ENCODE measurements at regions of chr20 and their contacts with region 1.

Region 1: DNA sequence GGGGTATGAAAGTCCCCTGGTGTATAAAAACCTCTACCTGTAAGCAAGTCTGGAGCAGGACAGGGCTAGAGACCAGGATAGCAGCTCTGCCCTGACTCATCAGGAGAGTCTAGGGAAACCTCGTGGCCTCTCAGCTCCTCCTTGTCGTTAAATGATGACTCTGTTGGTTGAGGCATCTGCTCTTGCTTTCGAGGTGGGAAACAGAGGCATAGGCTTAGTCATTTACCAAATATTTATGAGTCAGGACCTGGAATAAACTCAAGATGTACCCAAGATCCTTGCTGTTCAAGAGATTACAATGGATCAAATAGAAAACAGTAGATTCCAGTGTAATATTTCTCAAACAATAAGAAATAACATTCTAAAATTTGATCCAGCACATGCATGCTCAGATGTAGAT is 5.5 kb downstream of the MANBAL start:
- DNase-seq: no peak
- ATAC-seq: no peak
- H3K4me3 ChIP-seq: no peak overlapping the region
- H3K4me3 Mint-ChIP-seq: no peak overlapping the region
- H3K27ac ChIP-seq: no peak overlapping the region
- H3K27ac Mint-ChIP-seq: no peak overlapping the region
- H3K4me1 ChIP-seq: peaks cover 26 to 28% of the 10 kb centered on the region in 2 donors
- H3K4me1 Mint-ChIP-seq: peaks cover 50% of the 10 kb centered on the region
- H3K27me3 ChIP-seq: no peaks in the 10 kb centered on the region
- H3K27me3 Mint-ChIP-seq: no peaks in the 10 kb centered on the region
- CTCF ChIP-seq: no peak

Region 2: DNA sequence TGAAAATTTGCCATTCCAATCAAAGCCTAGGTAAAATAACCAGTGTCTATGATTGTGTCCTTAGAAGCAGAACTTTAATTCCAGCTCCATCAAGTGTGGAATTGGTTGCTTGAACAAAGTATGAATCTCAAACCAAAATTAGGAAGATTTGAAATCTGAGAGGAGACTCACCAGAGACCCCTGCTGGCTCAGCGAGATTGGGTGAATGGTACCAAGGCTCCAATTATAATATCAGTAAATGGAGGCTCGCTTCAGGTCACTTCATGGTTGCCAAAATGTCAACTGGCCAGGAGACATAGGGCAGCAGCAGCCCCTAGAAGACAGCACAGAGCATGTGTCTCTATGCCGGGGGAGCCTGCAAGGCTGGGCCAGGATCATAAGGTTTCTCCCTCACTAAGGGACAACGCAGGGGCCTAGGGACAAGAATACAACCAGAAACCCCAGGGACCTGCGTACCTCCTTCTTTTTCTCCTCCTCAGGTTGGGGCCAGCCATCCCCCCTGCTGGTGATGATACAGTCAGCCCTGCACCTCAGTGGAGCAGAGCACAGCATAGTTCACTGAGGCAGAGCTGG is 213.2 kb before region 1 on chr20:
- CTCF ChIA-PET with region 1: no interaction called
- POLR2A ChIA-PET with region 1: no interaction called
- intact Hi-C with region 1: no loop called
- DNase-seq: peak; percentile 20
- ATAC-seq: no peak
- H3K4me3 ChIP-seq: no peak overlapping the region
- H3K4me3 Mint-ChIP-seq: no peak overlapping the region
- H3K27ac ChIP-seq: no peak overlapping the region
- H3K27ac Mint-ChIP-seq: no peak overlapping the region
- H3K4me1 ChIP-seq: no peaks in the 10 kb centered on the region
- H3K4me1 Mint-ChIP-seq: peaks cover 5% of the 10 kb centered on the region
- H3K27me3 ChIP-seq: no peaks in the 10 kb centered on the region
- H3K27me3 Mint-ChIP-seq: no peaks in the 10 kb centered on the region
- CTCF ChIP-seq: peak; percentile 26

Region 3: DNA sequence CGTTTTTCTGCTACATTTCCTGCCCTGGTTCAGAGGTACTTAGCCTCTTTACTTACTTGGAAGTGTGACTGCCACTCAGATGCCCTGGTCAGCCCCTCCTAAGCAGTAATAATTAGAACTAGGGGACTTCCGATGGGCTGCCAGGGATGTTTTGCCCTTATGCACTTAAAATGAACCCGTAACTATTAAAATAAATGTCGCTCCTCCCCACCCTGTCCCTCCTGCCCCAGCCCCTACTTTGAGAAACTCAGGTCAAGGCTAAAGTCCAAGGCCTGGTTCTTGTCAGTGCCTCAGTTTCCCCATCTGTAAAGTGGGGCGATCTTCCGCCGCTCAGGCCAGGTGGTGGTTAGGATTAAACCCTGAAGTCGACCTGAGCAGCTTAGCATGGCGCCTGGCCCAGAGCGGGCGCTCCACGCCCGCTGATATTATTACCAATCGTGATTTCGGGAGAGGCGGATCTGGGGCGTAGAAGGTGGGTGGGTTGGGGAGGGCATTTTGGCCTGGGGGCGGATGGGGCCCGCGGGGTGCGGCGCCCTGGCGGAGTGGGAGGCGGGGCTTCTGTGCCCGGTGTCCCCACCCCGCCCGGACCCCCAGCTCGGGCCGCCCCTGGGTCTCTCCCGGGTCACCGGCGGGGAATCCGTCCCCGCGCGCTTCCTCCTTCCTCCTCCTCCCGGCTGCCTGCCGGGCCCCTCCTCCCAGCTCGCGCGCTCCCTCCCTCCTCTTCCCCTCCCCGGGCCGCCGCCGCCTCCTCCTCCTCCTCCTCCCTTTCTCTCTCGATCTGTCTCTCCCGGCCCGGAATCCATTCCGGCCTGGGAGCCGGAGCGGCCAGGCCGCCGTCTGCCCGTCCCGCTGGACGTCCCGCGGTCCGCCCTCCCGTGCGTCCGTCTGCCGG is 50.6 kb after region 1 on chr20 and contains the start of gene SRC:
- CTCF ChIA-PET with region 1: no interaction called
- POLR2A ChIA-PET with region 1: no interaction called
- intact Hi-C with region 1: loop called (anchors 5 kb)
- DNase-seq: peak; percentile 65
- ATAC-seq: peak; percentile 71
- H3K4me3 ChIP-seq: peak within 1 kb of the TSS in 4 of 5 experiments; percentile 57 to 72 (median 72)
- H3K4me3 Mint-ChIP-seq: peak within 1 kb of the TSS; percentile 81
- H3K27ac ChIP-seq: peak within 1 kb of the TSS; percentile 16 to 65
- H3K27ac Mint-ChIP-seq: peak within 1 kb of the TSS; percentile 81
- H3K4me1 ChIP-seq: peaks cover 13 to 26% of the 10 kb centered on the region in 2 donors
- H3K4me1 Mint-ChIP-seq: peaks cover 24% of the 10 kb centered on the region
- H3K27me3 ChIP-seq: no peaks in the 10 kb centered on the region
- H3K27me3 Mint-ChIP-seq: no peaks in the 10 kb centered on the region
- CTCF ChIP-seq: no peak
- total RNA-seq, gene SRC: 16.8 and 20.4 TPM in 2 replicates

Measured in B cell (primary cell).